Activated B cell treated with CpG ODN at 0.5 μM for 24 hours (primary cell): ENCODE measurements at regions of chr9 and their contacts with region 1.

Region 1: GRCh38 chr9:6931913-6932312 is 174.1 kb downstream of the KDM4C start:
- DNase-seq: no peak
- ATAC-seq: peak; percentile 90
- H3K4me3 Mint-ChIP-seq: no peak overlapping the region
- H3K27ac Mint-ChIP-seq: peak overlapping the region; percentile 70
- H3K4me1 Mint-ChIP-seq: peaks cover 53% of the 10 kb centered on the region
- H3K27me3 Mint-ChIP-seq: no peaks in the 10 kb centered on the region
- CTCF ChIP-seq: no peak

Region 2: DNA sequence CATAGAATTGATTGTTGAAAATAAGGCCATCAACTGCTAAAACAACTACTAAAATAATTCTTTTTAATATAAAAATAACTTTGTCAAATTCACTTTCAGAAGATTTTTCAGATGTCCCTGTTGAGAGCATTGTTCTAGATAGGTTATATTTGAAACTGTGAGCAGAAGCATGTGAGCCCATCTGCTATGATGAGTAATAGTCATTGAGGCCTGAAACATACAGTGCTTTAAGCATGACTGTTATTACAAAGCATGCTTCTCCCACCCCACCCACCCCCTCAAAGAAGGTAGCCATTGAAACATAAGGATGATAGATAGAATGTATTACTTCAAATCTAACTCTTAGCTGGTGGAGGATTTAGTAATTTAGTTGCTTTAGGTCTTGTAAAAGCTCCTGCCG is 432.9 kb before region 1 on chr9:
- CTCF ChIA-PET with region 1: no interaction called
- POLR2A ChIA-PET with region 1: no interaction called
- intact Hi-C with region 1: no loop called
- DNase-seq: no peak
- ATAC-seq: peak; percentile 37
- H3K4me3 Mint-ChIP-seq: no peak overlapping the region
- H3K27ac Mint-ChIP-seq: no peak overlapping the region
- H3K4me1 Mint-ChIP-seq: no peaks in the 10 kb centered on the region
- H3K27me3 Mint-ChIP-seq: no peaks in the 10 kb centered on the region
- CTCF ChIP-seq: no peak

Region 3: DNA sequence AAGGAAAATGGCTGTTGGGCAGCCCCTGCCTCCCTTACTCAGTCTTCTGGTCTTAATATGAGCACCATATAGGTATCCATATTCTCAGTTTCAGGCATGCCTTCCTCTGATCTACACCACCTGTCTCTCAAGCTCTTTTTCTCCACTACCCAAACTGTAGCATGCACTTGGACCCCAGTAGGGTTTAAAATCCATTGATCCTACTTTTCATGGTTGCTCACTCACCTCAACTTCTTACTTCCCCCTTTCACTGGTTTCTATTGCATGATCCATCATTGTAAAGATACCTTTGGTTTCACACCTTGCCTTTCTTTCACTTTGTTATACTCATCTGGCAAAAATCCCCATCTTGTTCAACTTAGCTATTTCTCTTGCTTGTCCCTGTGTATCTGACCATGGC is 14.8 kb before region 1 on chr9:
- CTCF ChIA-PET with region 1: no interaction called
- POLR2A ChIA-PET with region 1: no interaction called
- intact Hi-C with region 1: loop called (anchors 2 kb)
- DNase-seq: no peak
- ATAC-seq: no peak
- H3K4me3 Mint-ChIP-seq: no peak overlapping the region
- H3K27ac Mint-ChIP-seq: peak overlapping the region; percentile 2
- H3K4me1 Mint-ChIP-seq: peaks cover 51% of the 10 kb centered on the region
- H3K27me3 Mint-ChIP-seq: no peaks in the 10 kb centered on the region
- CTCF ChIP-seq: no peak